Activated naive CD4-positive, alpha-beta T cell treated with anti-CD3 and anti-CD28 coated beads for 36 hours (primary cell): ENCODE measurements at regions of chr7 and their contacts with region 1.

Region 1: DNA sequence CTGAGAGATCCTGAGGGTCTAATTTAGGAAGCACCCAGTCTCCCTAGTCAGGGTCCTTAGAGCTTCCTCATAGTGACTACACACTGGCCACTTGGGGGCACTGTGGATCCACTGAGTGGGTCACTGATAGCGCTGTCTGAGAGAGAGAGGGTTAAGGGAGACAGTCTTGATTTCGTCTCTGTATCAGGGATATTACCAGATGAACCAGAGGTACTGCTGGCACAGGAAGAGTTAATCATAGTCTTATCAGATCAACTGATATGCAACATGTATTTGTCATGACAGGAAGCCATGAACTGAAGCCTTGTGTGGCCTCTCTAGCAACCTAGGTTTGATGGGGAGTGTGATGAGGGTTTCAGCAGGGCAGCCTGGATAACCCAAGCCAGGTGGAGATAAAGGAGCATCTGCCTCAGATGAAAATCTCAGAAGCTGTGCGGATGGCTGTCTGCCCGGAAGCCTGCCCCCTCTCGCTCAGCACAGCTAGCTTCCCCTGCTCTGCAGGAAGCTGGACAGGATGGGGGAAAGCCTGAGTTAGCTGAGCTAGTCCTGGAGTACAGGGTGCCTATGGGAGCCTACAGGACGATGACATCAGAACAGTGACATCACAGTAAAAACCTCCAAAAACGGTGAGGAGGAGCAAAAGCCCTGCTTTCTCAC is 214.0 kb upstream of the PRSS1 start:
- DNase-seq: peak; percentile 91
- H3K4me3 Mint-ChIP-seq: peak overlapping the region; percentile 64
- H3K27ac Mint-ChIP-seq: peak overlapping the region; percentile 86
- H3K4me1 Mint-ChIP-seq: peaks cover 29% of the 10 kb centered on the region
- H3K27me3 Mint-ChIP-seq: no peaks in the 10 kb centered on the region

Region 2: DNA sequence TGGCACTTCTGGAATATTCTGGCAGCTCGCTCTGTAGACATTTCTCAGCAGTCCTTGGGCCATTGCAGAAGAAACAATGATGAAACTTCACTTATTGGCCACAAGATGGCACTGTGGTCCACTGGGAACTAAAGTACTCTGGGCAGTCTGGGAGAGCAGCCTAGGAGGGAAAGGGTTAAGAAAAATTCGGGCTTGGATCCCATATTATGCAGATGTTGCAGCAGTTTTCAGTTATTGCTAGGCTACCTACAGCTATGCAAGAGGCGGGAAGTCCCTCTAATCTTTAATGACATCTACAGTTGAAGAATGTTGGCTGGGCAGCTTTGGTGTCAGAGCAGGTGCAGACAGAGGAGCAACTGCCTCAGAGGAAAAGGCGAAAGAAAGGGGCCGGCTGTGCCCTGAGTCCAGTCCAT is 75.7 kb before region 1 on chr7:
- CTCF ChIA-PET with region 1: interaction called, 19 read pairs
- intact Hi-C with region 1: loop called (anchors 1 kb)
- DNase-seq: peak; percentile 59
- H3K4me3 Mint-ChIP-seq: peak overlapping the region; percentile 16
- H3K27ac Mint-ChIP-seq: peak overlapping the region; percentile 9
- H3K4me1 Mint-ChIP-seq: peaks cover 71% of the 10 kb centered on the region
- H3K27me3 Mint-ChIP-seq: no peaks in the 10 kb centered on the region

Region 3: GRCh38 chr7:142516038-142516501 is 19.2 kb before region 1 on chr7:
- CTCF ChIA-PET with region 1: interaction called, 22 read pairs
- intact Hi-C with region 1: loop called (anchors 1 kb)
- DNase-seq: peak; percentile 54
- H3K4me3 Mint-ChIP-seq: no peak overlapping the region
- H3K27ac Mint-ChIP-seq: peak overlapping the region; percentile 41
- H3K4me1 Mint-ChIP-seq: peaks cover 53% of the 10 kb centered on the region
- H3K27me3 Mint-ChIP-seq: no peaks in the 10 kb centered on the region

Region 4: DNA sequence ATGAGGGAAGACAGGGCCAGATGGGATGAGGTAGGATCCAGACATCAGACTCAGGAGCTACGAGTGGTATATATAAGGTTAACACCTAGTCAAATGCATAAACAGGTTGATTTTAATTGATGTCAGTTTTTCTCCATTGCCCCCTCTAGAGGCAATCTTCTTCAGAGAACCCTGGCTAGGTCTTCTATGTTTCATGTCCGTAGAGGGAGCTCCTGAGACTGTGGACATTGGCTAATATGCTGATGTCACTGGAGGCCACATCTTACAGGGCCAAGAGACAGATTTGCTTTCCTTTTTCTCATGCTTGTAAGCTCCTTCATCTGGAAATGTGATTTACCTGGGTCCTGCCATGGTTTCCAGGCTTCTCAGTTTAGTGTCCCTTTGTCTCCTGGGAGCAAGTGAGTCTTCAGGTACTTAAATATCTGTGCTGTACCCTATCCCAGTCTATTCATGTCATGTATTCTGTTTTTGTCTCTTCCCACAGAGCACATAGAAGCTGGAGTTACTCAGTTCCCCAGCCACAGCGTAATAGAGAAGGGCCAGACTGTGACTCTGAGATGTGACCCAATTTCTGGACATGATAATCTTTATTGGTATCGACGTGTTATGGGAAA is 52.4 kb after region 1 on chr7:
- CTCF ChIA-PET with region 1: interaction called, 20 read pairs
- intact Hi-C with region 1: loop called (anchors 1 kb)
- DNase-seq: no peak
- H3K4me3 Mint-ChIP-seq: peak overlapping the region; percentile 44
- H3K27ac Mint-ChIP-seq: peak overlapping the region; percentile 70
- H3K4me1 Mint-ChIP-seq: peaks cover 12% of the 10 kb centered on the region
- H3K27me3 Mint-ChIP-seq: no peaks in the 10 kb centered on the region

Region 5: DNA sequence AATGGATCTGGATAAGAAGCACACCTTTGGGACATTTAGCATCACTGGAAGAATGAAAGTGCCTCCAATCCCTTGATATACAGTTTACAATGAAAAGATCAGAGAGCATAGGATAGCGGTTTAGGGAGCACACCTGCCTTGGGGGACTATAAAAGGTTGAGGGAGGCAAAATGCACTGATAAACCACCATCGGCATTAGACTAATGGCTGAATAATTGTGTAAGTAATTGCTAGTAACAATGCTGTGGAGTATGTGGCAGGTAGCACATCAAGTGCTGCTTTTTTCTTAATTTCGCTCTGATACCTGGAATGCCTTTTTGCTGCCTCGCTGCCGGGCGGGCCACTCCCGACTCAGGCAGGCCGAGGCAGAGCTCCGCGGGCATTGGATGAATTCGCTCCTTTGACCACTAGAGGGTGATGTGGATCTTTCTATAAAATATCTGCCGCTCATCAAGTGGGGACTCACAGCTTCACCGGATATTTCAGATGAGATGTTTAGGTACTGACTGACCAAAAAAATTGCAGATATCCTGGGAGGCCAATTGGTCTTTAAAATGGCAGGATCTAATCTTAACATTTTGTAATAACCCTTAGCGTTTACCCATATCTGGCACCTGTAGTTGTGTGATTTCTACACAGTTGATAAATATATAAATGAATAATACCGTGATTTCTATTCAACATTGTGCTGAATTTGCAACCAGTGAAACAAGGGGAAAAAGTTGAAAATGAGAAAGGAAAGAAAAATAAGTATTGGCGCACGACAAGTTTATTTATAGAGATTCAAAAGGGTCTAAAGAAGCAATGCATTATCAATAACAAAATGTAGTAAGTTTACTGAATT is 97.3 kb after region 1 on chr7:
- CTCF ChIA-PET with region 1: no interaction called
- intact Hi-C with region 1: loop called (anchors 2 kb)
- DNase-seq: peak; percentile 66
- H3K4me3 Mint-ChIP-seq: no peak overlapping the region
- H3K27ac Mint-ChIP-seq: no peak overlapping the region
- H3K4me1 Mint-ChIP-seq: peaks cover 11% of the 10 kb centered on the region
- H3K27me3 Mint-ChIP-seq: no peaks in the 10 kb centered on the region

Region 6: DNA sequence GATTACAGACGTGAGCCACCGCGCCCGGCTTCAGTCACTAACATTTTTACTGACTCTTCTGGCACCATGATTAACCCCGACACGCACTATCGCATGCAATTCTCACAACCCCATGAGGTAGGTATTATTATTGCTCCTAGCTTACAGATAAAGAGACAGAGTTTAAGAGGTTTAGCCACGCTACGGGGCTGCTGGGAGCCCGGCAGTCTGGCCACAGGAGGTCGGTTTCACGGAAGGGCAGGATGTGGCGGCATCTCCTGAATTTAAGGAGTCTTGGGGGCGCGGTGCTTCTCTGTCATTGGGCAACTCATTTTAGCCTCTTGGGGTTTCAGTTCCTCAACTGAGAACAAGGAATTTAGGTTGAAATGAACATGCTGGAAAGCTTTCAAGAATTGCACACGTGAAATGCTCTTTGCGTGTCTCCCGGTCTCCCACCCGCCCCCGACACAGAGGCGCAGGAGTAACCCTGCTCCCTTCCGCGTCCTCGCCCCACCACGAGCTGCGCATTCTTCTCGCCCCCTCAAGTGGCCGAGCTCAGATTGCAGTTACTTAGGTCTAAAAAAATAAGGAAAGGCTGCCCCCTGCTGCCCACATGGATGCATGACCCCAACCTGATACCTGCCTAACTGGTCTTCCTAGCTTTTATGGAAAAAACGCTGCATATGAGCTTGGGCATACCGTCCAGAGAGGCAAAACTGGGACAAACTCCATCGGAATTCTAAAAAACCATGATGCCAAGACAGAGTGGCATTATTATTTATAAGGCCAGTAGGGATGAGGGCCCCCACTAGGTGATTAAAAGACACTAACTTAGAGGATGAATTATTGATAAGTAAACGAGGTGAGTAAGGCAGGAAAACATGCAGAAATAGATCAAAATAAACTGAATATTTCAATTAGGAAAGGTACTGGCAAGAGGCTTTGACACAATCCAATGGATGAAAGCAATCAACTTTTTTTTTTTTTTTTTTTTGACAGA is 248.0 kb after region 1 on chr7:
- CTCF ChIA-PET with region 1: interaction called, 6 read pairs
- intact Hi-C with region 1: loop called (anchors 1 kb)
- DNase-seq: peak; percentile 86
- H3K4me3 Mint-ChIP-seq: peak overlapping the region; percentile 72
- H3K27ac Mint-ChIP-seq: peak overlapping the region; percentile 99
- H3K4me1 Mint-ChIP-seq: peaks cover 8% of the 10 kb centered on the region
- H3K27me3 Mint-ChIP-seq: no peaks in the 10 kb centered on the region

Region 7: DNA sequence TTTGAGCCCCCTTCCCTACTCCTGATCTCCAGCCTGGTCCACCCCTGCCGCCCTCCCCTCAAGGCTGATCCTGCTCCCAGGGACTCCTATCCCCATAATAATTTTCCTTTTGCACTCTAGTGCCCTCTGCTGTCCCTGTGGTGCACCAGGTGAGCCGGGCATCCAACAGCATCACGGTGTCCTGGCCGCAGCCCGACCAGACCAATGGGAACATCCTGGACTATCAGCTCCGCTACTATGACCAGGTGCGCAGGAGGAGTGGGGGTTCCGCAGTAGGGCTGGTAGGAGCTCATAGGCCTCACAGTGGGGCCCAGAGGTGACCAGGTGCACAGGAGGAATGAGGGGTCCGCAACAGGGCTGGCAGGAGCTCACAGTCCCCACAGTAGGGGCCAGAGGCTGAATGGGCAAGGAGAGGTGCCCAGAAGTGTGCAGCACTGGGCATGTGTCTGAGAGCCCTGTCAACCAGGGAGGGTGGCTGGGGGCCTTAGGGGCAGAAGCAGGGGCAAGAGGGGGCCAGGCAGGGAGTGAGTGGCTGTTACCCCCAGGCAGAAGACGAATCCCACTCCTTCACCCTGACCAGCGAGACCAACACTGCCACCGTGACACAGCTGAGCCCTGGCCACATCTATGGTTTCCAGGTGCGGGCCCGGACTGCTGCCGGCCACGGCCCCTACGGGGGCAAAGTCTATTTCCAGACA is 331.3 kb after region 1 on chr7:
- CTCF ChIA-PET with region 1: no interaction called
- intact Hi-C with region 1: loop called (anchors 1 kb)
- DNase-seq: peak; percentile 27
- H3K4me3 Mint-ChIP-seq: no peak overlapping the region
- H3K27ac Mint-ChIP-seq: peak overlapping the region; percentile 46
- H3K4me1 Mint-ChIP-seq: peaks cover 2% of the 10 kb centered on the region
- H3K27me3 Mint-ChIP-seq: no peaks in the 10 kb centered on the region

Region 8: DNA sequence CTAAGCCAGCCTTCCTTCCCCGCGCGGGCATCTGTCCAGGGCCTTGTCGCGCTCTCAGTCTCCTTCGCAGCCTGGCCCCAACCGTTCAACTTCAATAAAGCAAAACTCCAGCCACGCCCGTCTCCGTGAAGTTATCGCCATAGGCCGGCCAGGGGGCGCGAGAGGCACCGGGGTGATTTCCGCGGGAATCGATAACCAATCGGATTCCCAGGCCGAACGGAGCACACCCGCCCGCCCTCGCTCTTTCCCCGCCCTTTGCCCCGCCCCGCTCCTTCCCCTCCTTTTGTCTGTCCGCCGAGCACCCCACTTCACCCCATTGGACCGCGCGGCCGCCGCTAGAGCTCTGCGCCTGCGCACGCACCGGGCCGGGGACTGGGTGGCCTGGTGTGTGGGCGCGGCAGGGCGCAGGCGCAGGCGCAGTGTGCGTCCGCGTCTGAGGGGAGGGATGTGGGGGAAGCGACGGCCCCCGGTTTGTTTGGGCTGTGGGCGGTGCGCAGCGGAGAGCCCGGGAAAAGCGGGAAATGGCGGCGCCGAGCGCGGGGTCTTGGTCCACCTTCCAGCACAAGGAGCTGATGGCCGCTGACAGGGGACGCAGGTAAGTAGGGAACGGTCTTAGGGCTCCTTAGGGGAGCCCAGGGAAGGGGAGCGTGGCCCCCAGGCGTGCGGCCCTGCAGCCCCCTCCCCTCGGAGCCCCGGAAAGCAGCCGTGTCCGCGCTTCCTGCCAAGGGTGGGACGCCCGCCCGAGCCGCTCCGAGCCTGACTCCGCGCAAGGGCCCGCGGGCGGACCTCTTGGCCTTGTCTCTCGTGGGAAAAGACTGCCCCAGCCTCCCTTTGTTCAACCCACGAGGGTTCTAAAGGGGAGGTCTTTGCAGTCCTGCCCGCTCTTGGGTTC is 752.9 kb after region 1 on chr7 and contains the start of gene CASP2:
- CTCF ChIA-PET with region 1: no interaction called
- intact Hi-C with region 1: no loop called
- DNase-seq: peak; percentile 99
- H3K4me3 Mint-ChIP-seq: peak within 1 kb of the TSS; percentile 96
- H3K27ac Mint-ChIP-seq: peak within 1 kb of the TSS; percentile 88
- H3K4me1 Mint-ChIP-seq: peaks cover 48% of the 10 kb centered on the region
- H3K27me3 Mint-ChIP-seq: no peaks in the 10 kb centered on the region
- total RNA-seq, gene CASP2: 116 to 124 TPM